Mammary epithelial cell (primary cell): ENCODE measurements at regions of chr3 and their contacts with region 1.

Region 1: DNA sequence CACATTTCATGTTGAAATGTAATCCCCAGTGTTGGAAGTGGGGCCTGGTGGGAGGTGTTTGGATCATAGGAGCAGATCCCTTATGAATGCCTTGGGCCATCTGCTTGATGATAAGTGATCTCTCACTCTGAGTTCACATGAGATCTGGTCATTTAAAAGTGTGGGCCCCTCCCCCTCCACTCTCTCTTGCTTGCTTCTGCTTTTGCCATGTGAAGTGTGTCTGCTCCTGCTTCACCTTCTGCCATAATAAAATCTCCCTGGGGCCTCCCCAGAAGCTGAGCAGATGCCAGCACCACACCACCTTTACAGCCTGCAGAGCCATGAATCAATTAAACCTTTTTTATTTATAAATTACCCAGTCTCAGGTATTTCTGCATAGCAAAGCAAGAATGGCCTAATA is 14.2 kb upstream of the CD200R1L start:
- DNase-seq: no peak
- H3K4me3 ChIP-seq: no peak overlapping the region
- H3K27ac ChIP-seq: no peak overlapping the region
- H3K4me1 ChIP-seq: no peaks in the 10 kb centered on the region
- H3K27me3 ChIP-seq: peaks cover 3% of the 10 kb centered on the region
- CTCF ChIP-seq: no peak

Region 2: DNA sequence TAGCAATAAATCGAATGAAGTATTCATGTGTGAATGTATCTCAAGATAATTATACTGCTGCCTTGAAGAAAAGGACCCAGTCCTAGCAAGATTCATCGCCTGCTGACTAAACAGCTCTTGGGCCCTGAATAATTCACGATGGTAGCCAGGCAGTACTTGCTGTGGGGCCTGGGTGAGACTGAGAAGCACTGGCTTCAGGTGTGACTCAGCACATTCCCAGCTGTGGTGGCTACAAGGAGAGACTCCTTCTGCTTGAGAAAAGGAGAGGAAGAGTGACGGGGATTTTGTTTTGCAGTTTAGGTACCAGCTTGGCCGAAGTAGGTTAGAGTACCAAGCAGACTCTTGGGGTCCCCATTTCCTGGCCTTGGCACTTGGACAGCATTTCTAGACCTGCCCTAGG is 33.4 kb after region 1 on chr3:
- CTCF ChIA-PET with region 1: no interaction called
- dilution Hi-C with region 1: no loop called
- in situ Hi-C with region 1: no loop called
- intact Hi-C with region 1: no loop called
- DNase-seq: peak; percentile 43
- H3K4me3 ChIP-seq: no peak overlapping the region
- H3K27ac ChIP-seq: no peak overlapping the region
- H3K4me1 ChIP-seq: no peaks in the 10 kb centered on the region
- H3K27me3 ChIP-seq: no peaks in the 10 kb centered on the region
- CTCF ChIP-seq: no peak

Region 3: GRCh38 chr3:112966633-112967032 is 105.7 kb after region 1 on chr3:
- CTCF ChIA-PET with region 1: no interaction called
- dilution Hi-C with region 1: no loop called
- in situ Hi-C with region 1: no loop called
- intact Hi-C with region 1: loop called (anchors 10 kb)
- DNase-seq: no peak
- H3K4me3 ChIP-seq: no peak overlapping the region
- H3K27ac ChIP-seq: no peak overlapping the region
- H3K4me1 ChIP-seq: no peaks in the 10 kb centered on the region
- H3K27me3 ChIP-seq: peaks cover 6% of the 10 kb centered on the region
- CTCF ChIP-seq: no peak

Region 4: DNA sequence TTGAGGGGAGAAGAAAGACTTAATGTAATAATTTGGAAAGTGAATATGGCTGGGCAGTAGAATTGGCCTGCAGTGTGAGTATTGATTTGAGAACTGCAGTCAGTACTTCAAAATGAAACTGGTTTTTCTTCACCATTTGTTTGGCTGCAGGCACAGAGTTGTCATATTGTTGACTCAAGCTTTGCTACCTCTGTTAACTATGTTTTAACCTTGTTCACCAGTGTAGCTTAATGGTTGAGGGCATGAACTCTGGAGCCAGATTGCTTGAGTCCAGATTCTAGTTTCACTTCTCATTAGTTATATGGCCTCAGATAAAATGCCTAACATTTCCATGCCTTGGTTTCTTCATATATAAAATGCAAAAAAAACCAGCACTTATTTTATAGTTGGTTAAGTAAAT is 516.3 kb after region 1 on chr3:
- CTCF ChIA-PET with region 1: no interaction called
- dilution Hi-C with region 1: no loop called
- in situ Hi-C with region 1: no loop called
- intact Hi-C with region 1: no loop called
- DNase-seq: no peak
- H3K4me3 ChIP-seq: no peak overlapping the region
- H3K27ac ChIP-seq: no peak overlapping the region
- H3K4me1 ChIP-seq: no peaks in the 10 kb centered on the region
- H3K27me3 ChIP-seq: no peaks in the 10 kb centered on the region
- CTCF ChIP-seq: no peak